ENCODE measurements at regions of chr4 and their contacts with region 1.

Region 1: GRCh38 chr4:167021545-167022155 is 212.6 kb downstream of the SPOCK3 start:
- H3K4me3 Mint-ChIP-seq: no peak overlapping the region
- H3K27ac Mint-ChIP-seq: no peak overlapping the region
- H3K4me1 Mint-ChIP-seq: no peaks in the 10 kb centered on the region
- H3K27me3 Mint-ChIP-seq: no peaks in the 10 kb centered on the region

Region 2: DNA sequence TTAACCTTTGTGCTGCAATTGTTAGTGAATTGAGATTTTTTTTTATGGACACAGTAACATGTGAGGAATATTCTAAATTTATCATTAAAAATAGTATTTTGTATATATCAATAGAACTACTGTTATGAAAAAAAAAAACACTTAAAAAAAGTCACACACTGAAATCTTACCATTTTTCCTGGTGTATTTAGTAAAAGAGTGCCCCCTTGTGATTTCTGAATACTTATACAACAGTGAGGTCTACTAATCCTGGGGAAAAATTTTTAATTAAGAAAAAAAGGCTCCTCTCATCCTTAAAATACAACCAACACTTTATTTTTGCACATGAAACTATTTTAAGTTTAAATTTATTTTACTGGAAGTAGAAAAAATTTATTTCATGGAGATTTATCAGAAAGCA is 269.0 kb after region 1 on chr4:
- intact Hi-C with region 1: loop called (anchors 1 kb)
- H3K4me3 Mint-ChIP-seq: no peak overlapping the region
- H3K27ac Mint-ChIP-seq: no peak overlapping the region
- H3K4me1 Mint-ChIP-seq: no peaks in the 10 kb centered on the region
- H3K27me3 Mint-ChIP-seq: no peaks in the 10 kb centered on the region

Region 3: DNA sequence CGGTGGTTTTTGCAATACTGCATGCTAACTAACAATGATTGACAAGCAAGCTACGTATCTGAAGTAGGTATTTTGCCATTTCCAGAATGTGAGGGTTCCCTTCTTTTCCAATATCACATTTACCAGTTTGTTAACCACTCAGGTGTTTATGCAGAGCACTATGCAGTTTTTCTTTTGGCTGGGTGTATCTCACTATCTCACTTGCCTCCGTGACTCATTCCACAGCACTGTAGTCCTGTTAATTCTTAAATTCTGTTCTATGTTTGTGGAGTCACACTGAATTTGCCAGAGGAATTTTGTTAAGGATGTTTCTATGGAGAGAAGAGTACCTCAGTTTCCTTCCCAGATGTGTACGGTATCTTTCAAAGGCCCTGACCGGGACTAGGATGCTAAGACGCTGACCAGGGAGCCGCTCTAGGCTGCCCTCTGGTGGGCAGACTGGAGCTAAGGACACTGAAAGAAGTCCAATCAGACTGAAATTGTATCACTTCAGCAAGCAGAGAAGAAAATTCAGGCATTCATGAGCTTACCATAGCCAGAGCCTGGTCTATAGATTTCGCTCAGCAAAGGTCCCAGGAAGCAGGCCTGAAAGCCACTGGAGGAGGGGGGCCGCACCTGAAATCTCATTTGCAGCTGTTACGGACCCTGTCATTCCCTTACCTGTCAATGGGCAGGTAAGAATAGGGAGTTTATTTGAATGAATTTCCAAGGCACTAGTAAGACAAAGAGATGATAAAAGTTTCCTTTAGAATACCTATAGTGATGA is 601.0 kb after region 1 on chr4:
- intact Hi-C with region 1: loop called (anchors 5 kb)
- H3K4me3 Mint-ChIP-seq: no peak overlapping the region
- H3K27ac Mint-ChIP-seq: no peak overlapping the region
- H3K4me1 Mint-ChIP-seq: no peaks in the 10 kb centered on the region
- H3K27me3 Mint-ChIP-seq: no peaks in the 10 kb centered on the region

Region 4: GRCh38 chr4:168076989-168077725 is 1055.5 kb after region 1 on chr4:
- intact Hi-C with region 1: loop called (anchors 2 kb)
- H3K4me3 Mint-ChIP-seq: no peak overlapping the region
- H3K27ac Mint-ChIP-seq: no peak overlapping the region
- H3K4me1 Mint-ChIP-seq: no peaks in the 10 kb centered on the region
- H3K27me3 Mint-ChIP-seq: no peaks in the 10 kb centered on the region